ENCODE measurements at regions of chrX and their contacts with region 1.

Region 1: DNA sequence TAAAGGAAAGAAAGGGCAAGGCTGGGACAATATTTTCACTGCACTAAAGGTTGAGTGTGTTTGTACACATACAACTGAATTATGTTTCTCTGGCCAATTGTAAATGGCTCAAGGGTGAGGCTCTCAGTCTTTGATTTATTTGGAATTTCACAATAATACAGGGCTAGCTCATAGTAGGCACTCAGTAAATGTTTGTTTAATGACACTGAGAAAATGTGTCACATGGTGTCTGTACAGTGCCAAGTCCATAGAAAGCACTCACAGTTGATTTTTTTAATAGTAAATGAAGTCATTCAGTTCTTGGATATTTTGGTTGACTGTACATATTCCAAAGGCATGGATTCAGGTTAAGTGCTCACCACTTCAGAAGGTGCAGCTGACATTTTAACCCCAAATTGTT is 176.3 kb downstream of the IL1RAPL2 start:
- DNase-seq: no peak
- ATAC-seq: no peak
- H3K4me3 ChIP-seq: no peak overlapping the region
- H3K27ac ChIP-seq: no peak overlapping the region
- H3K4me1 ChIP-seq: no peaks in the 10 kb centered on the region
- H3K27me3 ChIP-seq: no peaks in the 10 kb centered on the region
- CTCF ChIP-seq: no peak

Region 2: DNA sequence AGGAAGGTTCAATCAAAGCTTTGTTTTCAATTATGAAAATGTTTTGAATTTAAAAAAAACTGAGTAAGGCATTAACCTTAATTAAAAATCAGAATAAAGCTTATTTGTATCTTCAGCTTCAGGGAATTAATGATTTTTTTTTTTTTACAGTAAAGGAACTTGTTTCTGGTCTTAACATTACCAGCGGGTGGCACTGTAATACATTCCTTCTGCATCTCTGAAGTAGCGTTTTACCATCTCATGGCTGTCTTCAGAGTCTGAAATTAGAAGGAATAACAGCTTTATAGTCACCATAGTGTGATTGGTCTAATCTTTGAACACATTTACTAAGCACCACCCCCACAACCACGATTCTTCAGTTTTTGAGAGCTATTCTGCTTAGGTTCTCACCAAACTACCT is 73.8 kb before region 1 on chrX:
- CTCF ChIA-PET with region 1: no interaction called
- POLR2A ChIA-PET with region 1: no interaction called
- in situ Hi-C with region 1: no loop called
- intact Hi-C with region 1: no loop called
- DNase-seq: no peak
- ATAC-seq: no peak
- H3K4me3 ChIP-seq: no peak overlapping the region
- H3K27ac ChIP-seq: no peak overlapping the region
- H3K4me1 ChIP-seq: no peaks in the 10 kb centered on the region
- H3K27me3 ChIP-seq: no peaks in the 10 kb centered on the region
- CTCF ChIP-seq: no peak; the same call in 1 of the 2 replicates

Region 3: GRCh38 chrX:104712515-104712914 is 29.8 kb before region 1 on chrX:
- CTCF ChIA-PET with region 1: no interaction called
- POLR2A ChIA-PET with region 1: interaction called, 17 read pairs
- in situ Hi-C with region 1: no loop called
- intact Hi-C with region 1: no loop called
- DNase-seq: no peak
- ATAC-seq: no peak
- H3K4me3 ChIP-seq: no peak overlapping the region
- H3K27ac ChIP-seq: no peak overlapping the region
- H3K4me1 ChIP-seq: no peaks in the 10 kb centered on the region
- H3K27me3 ChIP-seq: no peaks in the 10 kb centered on the region
- CTCF ChIP-seq: no peak